GM18951 (cell line): ENCODE measurements at regions of chr18 and their contacts with region 1.

Region 1: DNA sequence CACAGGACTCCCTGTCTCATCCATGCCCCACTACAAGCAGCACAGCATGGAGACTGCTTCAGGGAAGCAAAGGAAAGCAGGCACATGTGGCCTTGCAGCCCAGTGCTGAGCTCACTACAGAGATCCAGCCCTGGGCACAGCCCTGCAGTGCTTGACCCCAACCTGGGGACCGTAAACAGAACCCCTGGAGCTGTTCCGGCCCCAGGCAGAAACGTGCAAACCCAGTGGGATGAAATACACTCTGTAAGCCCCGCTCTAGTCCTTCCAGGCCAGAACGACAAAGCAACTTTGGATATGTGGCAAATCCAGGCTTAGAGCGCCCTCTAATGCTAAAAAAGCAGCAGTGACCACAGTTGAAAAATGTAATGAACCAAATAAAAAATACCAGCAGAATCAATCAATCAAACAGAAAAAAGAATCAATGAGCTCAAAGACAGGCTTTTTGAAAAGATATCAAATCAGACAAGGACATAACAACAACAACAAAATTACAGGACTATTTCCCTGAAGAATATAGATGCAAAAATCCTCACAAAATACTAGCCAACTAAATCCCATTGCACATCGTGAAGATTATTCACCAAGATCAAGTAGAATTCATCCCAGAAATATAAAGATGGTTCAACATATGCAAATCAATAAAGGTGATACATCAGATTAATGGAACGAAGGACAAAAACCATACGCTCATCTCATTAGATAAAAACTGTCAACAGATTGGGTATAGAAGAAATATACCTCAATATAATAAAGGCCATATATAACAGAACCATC is 45.6 kb downstream of the ZNF519 start:
- POLR2A ChIP-seq: no peak

Region 2: GRCh38 chr18:13823707-13824395 is 262.8 kb before region 1 on chr18 and contains the start of gene MC5R:
- in situ Hi-C with region 1: loop called (anchors 10 kb)
- POLR2A ChIP-seq: no peak